A549 (cell line): ENCODE measurements at regions of chr15 and their contacts with region 1.

Region 1: DNA sequence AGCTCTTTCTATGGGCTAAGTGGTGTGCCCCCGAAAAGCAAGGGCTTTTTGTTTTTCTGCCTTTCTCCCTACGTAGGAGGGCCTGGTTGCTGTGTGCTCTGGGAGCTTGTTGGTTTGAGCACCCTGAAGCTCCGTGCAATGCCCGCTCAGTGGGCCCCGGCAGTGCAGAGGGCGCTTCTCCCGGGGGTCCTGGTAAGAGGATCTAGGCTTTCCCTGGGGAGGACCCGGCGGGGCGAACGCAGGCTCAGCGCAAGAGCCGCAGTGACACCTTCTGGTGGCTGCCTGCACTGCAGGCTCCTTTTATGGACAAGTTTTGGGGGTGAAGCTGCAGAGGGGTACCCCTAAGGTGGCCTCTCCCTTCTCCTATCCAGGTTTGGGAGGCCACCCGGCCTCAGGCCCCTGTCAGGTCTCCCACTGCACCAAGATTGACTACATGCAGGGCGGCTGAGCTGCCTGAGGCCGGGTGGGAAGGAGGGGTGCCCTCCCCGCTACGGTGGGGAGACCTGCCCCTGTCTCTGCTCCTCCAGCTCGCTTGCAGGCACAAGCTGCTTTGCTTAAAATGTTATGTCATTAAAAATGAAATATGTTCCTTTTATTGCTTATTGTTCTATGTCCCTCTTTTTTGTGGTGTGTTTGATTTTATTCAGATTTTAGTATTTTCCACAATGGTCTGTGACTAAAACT is 387.9 kb downstream of the GABRG3 start:
- DNase-seq: peak in 1 of 2 experiments; percentile 16
- ATAC-seq: peak; percentile 41 to 80; a peak in 3 of 6 replicates
- H3K4me3 ChIP-seq: no peak overlapping the region
- H3K27ac ChIP-seq: no peak overlapping the region
- H3K4me1 ChIP-seq: no peaks in the 10 kb centered on the region
- CTCF ChIP-seq: peak; percentile 79
- EP300 ChIP-seq: no peak
- POLR2A ChIP-seq: no peak
- RAD21 ChIP-seq: peak; percentile 81 to 90

Region 2: DNA sequence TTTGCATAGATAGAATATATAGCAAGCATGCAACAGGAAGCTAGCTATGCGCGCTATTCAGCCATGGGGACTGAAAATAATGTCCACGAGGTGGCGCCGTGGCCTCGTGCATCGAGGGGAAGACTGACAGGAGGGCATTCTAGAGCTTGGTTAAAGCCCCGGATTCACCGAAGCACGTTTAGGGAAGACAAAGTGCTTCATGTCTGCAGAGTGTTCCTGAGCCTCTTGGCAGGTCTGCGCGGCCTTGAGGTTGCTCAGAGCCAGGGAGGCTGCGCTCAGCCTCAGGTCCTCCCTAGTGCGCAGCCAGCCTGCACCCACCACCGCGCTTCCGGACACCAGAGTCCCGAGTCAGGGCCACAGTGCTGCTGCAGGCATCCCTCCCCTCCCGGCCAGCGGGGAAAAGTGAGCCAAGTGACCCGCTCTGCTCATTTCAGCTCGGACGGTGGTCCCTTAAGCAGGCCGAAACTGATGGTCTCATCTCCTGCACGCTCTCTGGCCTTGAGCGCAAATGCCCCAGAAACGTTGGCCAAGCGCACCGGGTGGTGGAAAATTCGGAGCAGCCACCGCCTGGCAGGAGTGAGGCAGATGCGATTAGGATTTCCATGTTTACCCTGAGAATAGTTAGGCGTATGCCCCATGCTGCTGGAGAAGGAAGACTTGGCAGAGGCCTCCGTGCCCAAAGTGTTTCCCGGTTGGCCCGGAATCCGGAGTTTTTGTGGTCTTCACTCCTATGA is 467.3 kb before region 1 on chr15:
- CTCF ChIA-PET with region 1: interaction called, 11 read pairs
- POLR2A ChIA-PET with region 1: no interaction called
- DNase-seq: peak; percentile 48 to 70
- ATAC-seq: peak; percentile 61 to 79; a peak in 4 of 6 replicates
- H3K4me3 ChIP-seq: no peak overlapping the region
- H3K27ac ChIP-seq: no peak overlapping the region
- H3K4me1 ChIP-seq: peaks cover 20% of the 10 kb centered on the region
- CTCF ChIP-seq: peak; percentile 63
- EP300 ChIP-seq: no peak
- POLR2A ChIP-seq: no peak
- RAD21 ChIP-seq: peak; percentile 68 to 79

Region 3: GRCh38 chr15:26974120-26974780 is 384.6 kb before region 1 on chr15:
- CTCF ChIA-PET with region 1: interaction called, 15 read pairs
- POLR2A ChIA-PET with region 1: no interaction called
- DNase-seq: peak; percentile 35 to 69
- ATAC-seq: peak; percentile 67 to 76; a peak in 4 of 6 replicates
- H3K4me3 ChIP-seq: no peak overlapping the region
- H3K27ac ChIP-seq: no peak overlapping the region
- H3K4me1 ChIP-seq: peaks cover 5% of the 10 kb centered on the region; the same call in 1 of the 3 replicates
- CTCF ChIP-seq: peak; percentile 52
- EP300 ChIP-seq: no peak
- POLR2A ChIP-seq: no peak
- RAD21 ChIP-seq: peak; percentile 53 to 58; a peak in 4 of 5 replicates

Region 4: DNA sequence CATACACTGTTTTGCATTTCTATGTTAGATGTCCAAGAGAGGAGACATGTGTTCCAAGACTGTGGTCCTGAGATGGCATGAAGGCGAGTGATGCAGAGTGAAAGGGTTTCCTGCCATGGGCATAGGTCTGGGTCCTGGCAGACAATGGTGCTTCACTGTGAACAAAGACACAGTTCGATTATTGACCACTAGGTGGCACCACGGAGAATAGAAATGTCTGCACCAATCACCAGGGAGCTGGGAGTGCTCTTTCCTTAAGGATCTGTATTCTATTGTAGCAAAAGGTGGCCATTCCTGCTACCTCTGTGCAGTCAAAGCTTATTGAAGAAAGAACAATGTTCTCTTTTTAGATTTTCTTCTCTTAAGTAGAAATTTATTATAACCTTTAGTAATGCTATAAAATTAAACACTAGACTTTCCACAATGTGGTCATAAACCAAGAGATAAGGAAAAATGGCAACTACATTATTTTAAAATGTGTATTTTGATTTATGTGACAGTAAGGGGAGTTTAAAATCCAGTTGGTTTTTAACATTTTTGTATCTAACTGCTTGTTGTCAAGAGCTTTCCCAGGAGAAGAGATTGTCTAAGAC is 299.2 kb before region 1 on chr15:
- CTCF ChIA-PET with region 1: interaction called, 29 read pairs
- POLR2A ChIA-PET with region 1: no interaction called
- DNase-seq: peak; percentile 75 to 84
- ATAC-seq: peak; percentile 56 to 91; a peak in 4 of 6 replicates
- H3K4me3 ChIP-seq: no peak overlapping the region
- H3K27ac ChIP-seq: no peak overlapping the region
- H3K4me1 ChIP-seq: peaks cover 8% of the 10 kb centered on the region; the same call in 2 of the 3 replicates
- CTCF ChIP-seq: peak; percentile 55
- EP300 ChIP-seq: no peak
- POLR2A ChIP-seq: no peak
- RAD21 ChIP-seq: peak; percentile 47 to 48

Region 5: DNA sequence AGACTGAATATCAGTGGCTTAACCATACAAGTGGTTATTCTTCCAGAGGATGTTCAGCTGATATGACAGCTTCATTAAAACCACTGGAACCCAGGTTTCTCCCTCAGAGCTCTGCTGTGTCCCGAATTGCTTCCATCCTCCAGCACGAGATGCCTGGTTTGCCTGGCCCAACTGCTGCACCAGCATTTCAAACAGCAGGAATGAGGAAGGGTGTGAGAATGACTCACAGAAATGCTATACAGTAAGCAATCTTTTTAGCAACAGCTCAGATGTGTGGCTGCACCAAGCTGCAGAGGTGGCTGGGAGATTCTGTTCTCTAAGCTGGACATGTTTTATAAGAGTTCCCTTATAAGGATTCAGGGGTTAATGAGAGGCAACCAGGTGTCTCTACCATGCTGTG is 117.0 kb before region 1 on chr15:
- CTCF ChIA-PET with region 1: no interaction called
- POLR2A ChIA-PET with region 1: no interaction called
- DNase-seq: peak in 1 of 2 experiments; percentile 8
- ATAC-seq: peak; percentile 47 to 56; a peak in 3 of 6 replicates
- H3K4me3 ChIP-seq: no peak overlapping the region
- H3K27ac ChIP-seq: no peak overlapping the region
- H3K4me1 ChIP-seq: peaks cover 5% of the 10 kb centered on the region; the same call in 1 of the 3 replicates
- CTCF ChIP-seq: no peak
- EP300 ChIP-seq: no peak
- POLR2A ChIP-seq: no peak
- RAD21 ChIP-seq: no peak

Region 6: DNA sequence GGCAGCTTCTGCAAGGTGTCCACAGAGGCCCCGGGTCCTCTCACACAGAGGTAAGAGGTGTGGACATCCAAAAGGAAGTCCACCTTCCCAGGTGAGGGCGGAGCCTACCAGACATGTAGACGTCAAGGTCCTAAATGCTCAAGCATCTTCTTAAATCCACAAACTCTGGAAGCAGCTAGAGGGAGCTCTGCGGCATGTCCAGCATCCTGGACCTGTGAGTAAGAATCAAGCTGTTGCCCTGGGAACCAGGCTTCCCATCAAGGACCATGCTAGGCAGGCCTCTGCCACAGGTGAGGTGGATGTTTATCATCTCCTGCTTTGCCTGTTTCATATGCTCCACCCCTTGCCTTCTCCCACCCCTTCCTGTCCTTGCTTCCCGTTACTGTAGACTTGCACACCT is 19.8 kb before region 1 on chr15:
- CTCF ChIA-PET with region 1: interaction called, 23 read pairs
- POLR2A ChIA-PET with region 1: no interaction called
- DNase-seq: no peak
- ATAC-seq: no peak
- H3K4me3 ChIP-seq: no peak overlapping the region
- H3K27ac ChIP-seq: no peak overlapping the region
- H3K4me1 ChIP-seq: peaks cover 7% of the 10 kb centered on the region; the same call in 1 of the 3 replicates
- CTCF ChIP-seq: no peak
- EP300 ChIP-seq: no peak
- POLR2A ChIP-seq: no peak
- RAD21 ChIP-seq: no peak